MCF 10A (cell line): ENCODE measurements at regions of chr1 and their contacts with region 1.

Region 1: DNA sequence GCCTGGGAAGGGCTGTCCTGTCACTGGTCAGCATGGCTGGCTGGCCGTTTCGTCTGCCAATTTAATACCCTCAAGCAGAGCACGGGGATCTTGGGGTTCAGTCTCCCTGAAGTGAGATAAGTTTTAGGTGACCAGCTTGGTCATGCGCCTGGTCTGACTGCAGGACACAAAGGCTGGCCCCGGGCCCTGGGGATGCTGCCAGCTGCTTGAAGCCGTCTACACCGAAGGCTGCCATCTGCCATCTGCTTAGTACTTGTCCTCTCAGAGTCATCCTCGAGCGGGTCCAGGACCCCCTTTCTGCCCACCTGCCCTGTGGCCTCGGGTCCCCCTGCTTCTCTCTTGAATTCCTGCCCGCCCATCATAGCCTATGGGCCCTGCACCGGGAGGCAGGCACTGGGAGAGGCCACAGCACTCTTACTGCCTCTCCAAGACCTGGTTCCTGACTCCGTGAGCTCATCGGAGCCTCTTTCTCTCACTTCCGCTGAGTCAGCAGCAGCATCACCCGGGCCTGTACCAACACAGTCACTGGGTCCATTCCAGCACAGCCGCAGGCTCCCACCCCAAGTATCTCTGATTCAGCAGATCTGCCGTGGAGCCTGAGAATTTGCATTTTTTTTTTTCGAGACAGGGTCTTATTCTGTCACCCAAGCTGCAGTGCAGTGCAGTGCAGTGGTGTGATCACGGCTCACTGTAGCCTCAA is 7.0 kb downstream of the FBLIM1 start:
- DNase-seq: peak; percentile 97
- H3K4me3 Mint-ChIP-seq: peak overlapping the region; percentile 52
- H3K27ac Mint-ChIP-seq: peak overlapping the region; percentile 52
- H3K4me1 Mint-ChIP-seq: peaks cover 26% of the 10 kb centered on the region
- H3K27me3 Mint-ChIP-seq: no peaks in the 10 kb centered on the region
- CTCF ChIP-seq: no peak

Region 2: DNA sequence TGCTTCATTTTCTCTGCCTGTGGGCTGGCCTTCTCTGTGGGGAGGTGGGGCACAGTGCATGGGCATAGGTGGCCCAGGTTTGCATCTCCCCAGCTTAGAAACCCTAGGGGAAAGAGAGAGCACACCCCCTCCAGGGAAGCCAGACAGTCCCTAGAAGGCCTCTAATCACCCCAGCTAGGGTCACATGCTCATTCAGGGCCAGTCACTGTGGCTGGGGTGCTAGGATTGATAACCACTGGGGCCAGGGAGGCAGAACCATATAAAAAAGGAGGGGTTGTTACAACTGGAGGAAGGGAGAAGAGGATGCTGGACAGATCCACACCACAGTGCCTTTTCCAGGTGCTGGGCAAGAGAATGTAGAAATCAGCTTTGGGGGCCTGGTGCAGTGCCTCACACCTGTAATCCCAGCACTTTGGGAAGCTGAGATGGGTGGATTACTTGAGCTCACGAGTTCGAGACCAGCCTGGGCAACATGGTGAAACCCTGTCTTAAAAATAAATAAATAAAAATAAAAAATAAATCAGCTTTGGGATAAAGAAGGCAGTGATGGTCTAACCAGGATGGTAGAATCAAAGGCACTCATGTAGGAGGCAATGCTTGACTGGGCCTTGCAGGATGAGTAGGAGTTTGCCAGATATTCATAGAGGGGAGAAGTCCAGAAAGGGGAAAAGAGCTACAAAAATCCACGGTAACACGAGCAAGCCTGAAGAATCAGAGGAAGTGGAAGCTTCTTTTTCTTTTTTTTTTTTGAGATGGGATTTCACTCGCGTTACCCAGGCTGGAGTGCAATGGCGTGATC is 12.5 kb after region 1 on chr1:
- CTCF ChIA-PET with region 1: interaction called, 3 read pairs
- POLR2A ChIA-PET with region 1: interaction called, 11 read pairs
- intact Hi-C with region 1: no loop called
- DNase-seq: no peak
- H3K4me3 Mint-ChIP-seq: no peak overlapping the region
- H3K27ac Mint-ChIP-seq: no peak overlapping the region
- H3K4me1 Mint-ChIP-seq: no peaks in the 10 kb centered on the region
- H3K27me3 Mint-ChIP-seq: no peaks in the 10 kb centered on the region
- CTCF ChIP-seq: no peak

Region 3: DNA sequence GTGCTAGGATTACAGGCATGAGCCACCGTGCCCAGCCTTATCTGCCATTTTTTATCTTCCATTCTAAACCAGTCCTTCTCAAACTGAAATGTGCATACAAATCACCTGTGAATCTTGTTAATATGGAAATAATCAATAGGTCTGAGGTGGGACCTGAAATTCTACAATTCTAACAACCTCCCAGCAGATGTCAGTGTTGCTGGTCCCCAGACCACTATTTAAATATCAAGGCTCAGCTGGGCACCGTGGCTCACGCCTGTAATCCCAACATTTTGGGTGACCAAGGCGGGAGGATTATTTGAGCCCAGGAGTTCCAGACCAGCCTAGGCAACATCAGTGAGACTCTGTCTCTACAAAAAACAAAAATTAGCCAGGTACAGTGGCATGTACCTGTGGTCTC is 37.7 kb after region 1 on chr1:
- CTCF ChIA-PET with region 1: no interaction called
- POLR2A ChIA-PET with region 1: interaction called, 33 read pairs
- intact Hi-C with region 1: no loop called
- DNase-seq: peak; percentile 54
- H3K4me3 Mint-ChIP-seq: no peak overlapping the region
- H3K27ac Mint-ChIP-seq: no peak overlapping the region
- H3K4me1 Mint-ChIP-seq: peaks cover 38% of the 10 kb centered on the region
- H3K27me3 Mint-ChIP-seq: no peaks in the 10 kb centered on the region
- CTCF ChIP-seq: peak; percentile 36

Region 4: DNA sequence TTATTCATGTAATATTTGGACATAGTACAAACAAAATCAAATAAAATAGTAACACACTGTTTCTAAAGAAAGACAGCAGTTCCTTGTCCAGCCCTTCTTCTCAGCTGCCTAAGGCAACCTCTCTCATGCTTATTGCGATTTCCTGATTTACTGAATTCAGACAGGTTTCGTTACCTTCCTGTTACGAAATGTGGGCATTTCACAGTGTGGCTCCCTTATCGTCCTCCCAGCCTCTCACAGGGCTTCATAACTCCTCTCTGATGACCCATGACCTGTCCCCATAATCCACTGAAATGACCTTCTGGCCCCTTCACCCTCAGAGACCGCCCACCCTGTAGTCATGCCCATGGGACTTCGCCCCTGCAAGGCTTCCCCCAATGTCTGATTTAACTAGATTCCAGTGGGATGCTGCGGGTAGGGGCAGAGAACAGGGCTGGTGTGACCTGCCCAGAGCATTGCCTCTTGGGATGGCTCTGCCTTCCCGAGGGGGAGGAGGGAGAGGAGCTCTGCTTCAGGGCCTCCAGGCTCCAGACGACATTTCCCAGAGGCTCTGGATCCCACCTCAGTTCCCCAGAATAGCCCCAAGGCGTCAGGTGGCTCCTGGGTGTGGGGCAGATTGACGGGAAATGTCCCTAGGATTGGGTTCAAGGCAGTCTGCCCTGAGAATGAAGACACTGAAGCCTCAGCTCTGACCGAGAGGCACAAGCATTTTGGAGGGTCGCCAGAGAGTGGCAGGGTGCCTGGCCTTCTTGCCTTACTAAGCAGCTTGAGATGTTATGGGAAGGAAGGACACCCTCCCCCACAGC is 1333.0 kb after region 1 on chr1:
- CTCF ChIA-PET with region 1: no interaction called
- POLR2A ChIA-PET with region 1: no interaction called
- intact Hi-C with region 1: no loop called
- DNase-seq: peak; percentile 80
- H3K4me3 Mint-ChIP-seq: peak overlapping the region; percentile 2
- H3K27ac Mint-ChIP-seq: peak overlapping the region; percentile 61
- H3K4me1 Mint-ChIP-seq: peaks cover 22% of the 10 kb centered on the region
- H3K27me3 Mint-ChIP-seq: no peaks in the 10 kb centered on the region
- CTCF ChIP-seq: no peak